ENCODE measurements at regions of chr1 and their contacts with region 1.

Region 1: GRCh38 chr1:164272141-164272540 is 286.8 kb upstream of the PBX1 start:
- DNase-seq: no peak
- H3K4me3 ChIP-seq: no peak overlapping the region
- H3K27ac ChIP-seq: no peak overlapping the region
- H3K4me1 ChIP-seq: no peaks in the 10 kb centered on the region
- H3K27me3 ChIP-seq: no peaks in the 10 kb centered on the region
- CTCF ChIP-seq: no peak
- EP300 ChIP-seq: no peak
- POLR2A ChIP-seq: no peak

Region 2: DNA sequence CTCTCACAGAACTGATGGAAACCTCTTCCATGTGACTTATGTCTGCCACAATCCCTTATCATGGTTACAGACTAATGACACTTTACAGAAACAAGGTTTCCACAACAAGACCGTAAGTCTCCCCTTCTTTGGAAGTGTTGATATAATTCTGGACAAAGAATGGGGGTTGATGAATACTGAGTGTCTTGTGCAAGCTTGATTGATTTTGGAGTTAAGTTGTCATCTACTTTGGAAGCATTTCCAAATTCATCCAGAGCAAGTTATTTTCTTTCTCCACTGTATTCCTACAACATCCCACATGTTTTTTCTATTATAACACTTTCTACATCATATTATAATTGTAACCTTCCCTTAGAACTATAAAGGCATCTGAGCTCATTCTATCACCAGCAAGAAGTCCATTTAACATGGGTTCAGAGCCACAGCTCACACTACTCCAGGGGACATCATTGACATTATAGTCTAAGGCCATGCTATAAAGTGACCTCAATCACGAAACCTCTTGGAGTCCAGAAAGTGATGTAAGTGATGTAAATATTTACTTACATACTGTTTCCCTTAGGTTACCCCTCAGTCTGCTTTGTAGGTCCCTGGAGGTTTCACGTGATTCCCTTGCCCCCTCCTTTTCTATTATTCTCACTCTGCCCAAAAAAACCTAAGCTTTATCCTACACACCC is 161.1 kb after region 1 on chr1:
- in situ Hi-C with region 1: no loop called
- intact Hi-C with region 1: loop called (anchors 5 kb)
- DNase-seq: no peak
- H3K4me3 ChIP-seq: no peak overlapping the region
- H3K27ac ChIP-seq: no peak overlapping the region
- H3K4me1 ChIP-seq: no peaks in the 10 kb centered on the region
- H3K27me3 ChIP-seq: no peaks in the 10 kb centered on the region
- CTCF ChIP-seq: no peak
- EP300 ChIP-seq: no peak
- POLR2A ChIP-seq: no peak

Region 3: DNA sequence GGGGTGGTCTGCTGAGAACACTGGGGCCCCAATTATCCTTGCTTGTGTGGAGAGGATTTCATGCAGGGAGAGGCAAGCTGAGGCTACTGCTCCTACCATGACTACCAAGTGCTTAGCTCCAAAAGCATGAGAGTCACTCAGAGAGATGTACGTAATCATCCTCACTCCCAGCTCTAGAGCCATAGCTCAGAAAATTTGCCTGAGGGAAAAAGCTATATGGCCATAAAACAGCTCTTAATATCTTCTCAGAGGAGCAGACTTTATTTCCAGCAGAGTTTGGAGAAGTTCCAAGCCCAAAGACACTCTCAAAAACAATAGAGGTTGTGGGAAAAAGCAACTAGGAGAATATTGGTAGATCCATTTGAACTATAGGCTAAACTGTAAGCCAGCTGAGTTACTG is 180.4 kb after region 1 on chr1:
- in situ Hi-C with region 1: no loop called
- intact Hi-C with region 1: no loop called
- DNase-seq: no peak
- H3K4me3 ChIP-seq: no peak overlapping the region
- H3K27ac ChIP-seq: no peak overlapping the region
- H3K4me1 ChIP-seq: no peaks in the 10 kb centered on the region
- H3K27me3 ChIP-seq: no peaks in the 10 kb centered on the region
- CTCF ChIP-seq: no peak
- EP300 ChIP-seq: no peak
- POLR2A ChIP-seq: no peak

Measured in transverse colon (tissue), 4 donors.